ENCODE measurements at regions of chr10 and their contacts with region 1.

Region 1: GRCh38 chr10:70324339-70324861 is 40.6 kb upstream of the NPFFR1 start:
- DNase-seq: peak in 1 of 2 donors; percentile 57
- ATAC-seq: peak; percentile 25 to 41
- H3K4me3 ChIP-seq: no peak overlapping the region
- H3K27ac ChIP-seq: peak overlapping the region; percentile 68 to 79 (median 75)
- H3K4me1 ChIP-seq: peaks cover 27 to 55% of the 10 kb centered on the region in 2 donors
- H3K27me3 ChIP-seq: no peaks in the 10 kb centered on the region
- CTCF ChIP-seq: no peak
- POLR2A ChIP-seq: peak in 1 of 2 donors; percentile 11

Region 2: GRCh38 chr10:70296406-70296899 is 27.9 kb before region 1 on chr10:
- in situ Hi-C with region 1: no loop called
- intact Hi-C with region 1: loop called (anchors 2 kb)
- DNase-seq: peak; percentile 81 to 89
- ATAC-seq: peak; percentile 97 to 99
- H3K4me3 ChIP-seq: no peak overlapping the region
- H3K27ac ChIP-seq: peak overlapping the region; percentile 69 to 85 (median 80)
- H3K4me1 ChIP-seq: peaks cover 7 to 15% of the 10 kb centered on the region in 2 donors
- H3K27me3 ChIP-seq: no peaks in the 10 kb centered on the region
- CTCF ChIP-seq: no peak
- POLR2A ChIP-seq: peak in 1 of 2 donors; percentile 9

Region 3: GRCh38 chr10:70343312-70343711 is 18.9 kb after region 1 on chr10:
- in situ Hi-C with region 1: no loop called
- intact Hi-C with region 1: loop called (anchors 1 kb)
- DNase-seq: peak in 1 of 2 donors; percentile 35
- ATAC-seq: peak; percentile 23 to 33
- H3K4me3 ChIP-seq: peak overlapping the region in 1 of 4 donors; percentile 8
- H3K27ac ChIP-seq: peak overlapping the region; percentile 77 to 86 (median 82)
- H3K4me1 ChIP-seq: peaks cover 55 to 57% of the 10 kb centered on the region in 2 donors
- H3K27me3 ChIP-seq: no peaks in the 10 kb centered on the region
- CTCF ChIP-seq: no peak
- POLR2A ChIP-seq: no peak